Caco-2 (cell line): ENCODE measurements at regions of chr17 and their contacts with region 1.

Region 1: GRCh38 chr17:8248751-8249607 is at the start of gene PFAS:
- DNase-seq: peak; percentile 91 to 93
- H3K4me3 ChIP-seq: peak within 1 kb of the TSS; percentile 61
- H3K4me3 Mint-ChIP-seq: peak within 1 kb of the TSS; percentile 98
- H3K27ac Mint-ChIP-seq: peak within 1 kb of the TSS; percentile 96
- H3K4me1 ChIP-seq: no peaks in the 10 kb centered on the region
- H3K4me1 Mint-ChIP-seq: peaks cover 9% of the 10 kb centered on the region
- H3K27me3 ChIP-seq: no peaks in the 10 kb centered on the region
- H3K27me3 Mint-ChIP-seq: no peaks in the 10 kb centered on the region
- CTCF ChIP-seq: no peak
- total RNA-seq, gene PFAS: 38.8 and 44.1 TPM in 2 replicates

Region 2: DNA sequence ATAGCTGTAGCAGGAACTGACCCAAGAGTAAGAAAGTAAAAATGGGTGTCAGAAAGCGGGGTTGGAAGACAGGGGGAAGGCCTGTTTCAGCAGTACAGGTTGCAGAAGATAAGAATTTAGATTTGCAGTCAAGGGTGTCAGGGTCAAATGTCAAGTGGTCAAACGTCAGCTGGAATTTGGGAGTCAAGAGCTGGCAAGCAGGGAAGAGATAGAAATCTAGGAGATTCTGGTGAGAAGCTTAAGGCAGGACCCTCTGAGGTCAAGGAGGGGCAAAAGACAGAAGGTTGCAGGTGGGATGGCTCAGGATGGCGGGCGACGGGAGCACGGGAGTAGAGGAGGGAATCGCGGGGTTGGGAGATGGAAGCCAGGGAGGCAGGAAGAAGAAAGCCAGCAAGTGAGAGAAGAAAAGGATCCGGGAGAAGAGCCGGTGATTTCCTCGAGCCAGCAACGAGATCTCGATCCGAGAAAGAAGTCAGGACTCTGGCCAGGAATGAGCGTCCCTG is 45.9 kb after region 1 on chr17:
- CTCF ChIA-PET with region 1: interaction called, 3 read pairs
- POLR2A ChIA-PET with region 1: interaction called, 31 read pairs
- intact Hi-C with region 1: loop called (anchors 1 kb)
- DNase-seq: no peak
- H3K4me3 ChIP-seq: peak overlapping the region; percentile 39
- H3K4me3 Mint-ChIP-seq: peak overlapping the region; percentile 86
- H3K27ac Mint-ChIP-seq: peak overlapping the region; percentile 93
- H3K4me1 ChIP-seq: peaks cover 5% of the 10 kb centered on the region; the same call in 1 of the 2 replicates
- H3K4me1 Mint-ChIP-seq: peaks cover 7% of the 10 kb centered on the region
- H3K27me3 ChIP-seq: no peaks in the 10 kb centered on the region
- H3K27me3 Mint-ChIP-seq: no peaks in the 10 kb centered on the region
- CTCF ChIP-seq: no peak

Region 3: DNA sequence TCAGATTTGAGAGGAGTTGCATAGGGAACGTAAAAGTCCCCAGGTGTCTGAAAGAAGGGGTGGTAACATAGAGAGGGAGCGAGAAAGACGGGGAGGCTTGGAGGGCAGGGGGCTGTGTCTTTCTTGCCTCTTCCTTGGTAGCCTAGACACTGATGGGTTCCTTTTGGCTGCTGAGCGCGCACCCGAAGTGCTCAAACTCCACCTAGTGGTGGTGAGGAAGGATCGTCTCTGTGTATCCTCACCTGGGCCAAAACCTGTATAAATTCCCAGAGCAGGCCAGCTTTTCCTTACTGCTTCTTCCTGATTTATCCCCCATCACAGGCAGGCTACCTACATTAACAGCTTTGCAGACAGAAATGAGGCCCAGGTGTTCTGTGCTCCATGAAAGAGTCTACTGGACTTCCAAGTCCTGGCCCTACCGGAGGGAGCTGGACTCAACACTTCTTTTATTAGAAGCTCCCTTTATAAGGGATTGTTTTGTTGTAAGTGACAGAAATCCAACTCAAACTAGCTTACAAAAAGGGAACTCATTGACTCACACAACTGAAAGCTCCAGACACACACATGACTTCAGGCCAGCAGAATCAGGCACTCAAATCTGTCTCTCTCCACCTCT is 51.8 kb after region 1 on chr17:
- CTCF ChIA-PET with region 1: interaction called, 4 read pairs
- POLR2A ChIA-PET with region 1: interaction called, 31 read pairs
- intact Hi-C with region 1: loop called (anchors 1 kb)
- DNase-seq: peak; percentile 45 to 48
- H3K4me3 ChIP-seq: no peak overlapping the region
- H3K4me3 Mint-ChIP-seq: no peak overlapping the region
- H3K27ac Mint-ChIP-seq: no peak overlapping the region
- H3K4me1 ChIP-seq: no peaks in the 10 kb centered on the region
- H3K4me1 Mint-ChIP-seq: no peaks in the 10 kb centered on the region
- H3K27me3 ChIP-seq: no peaks in the 10 kb centered on the region
- H3K27me3 Mint-ChIP-seq: no peaks in the 10 kb centered on the region
- CTCF ChIP-seq: peak; percentile 54 to 67